Caco-2 (cell line): ENCODE measurements at regions of chr19 and their contacts with region 1.

Region 1: GRCh38 chr19:43425567-43426392 is 11.1 kb downstream of the TEX101 start:
- DNase-seq: peak in 1 of 2 experiments; percentile 29
- H3K4me3 ChIP-seq: no peak overlapping the region
- H3K4me3 Mint-ChIP-seq: no peak overlapping the region
- H3K27ac Mint-ChIP-seq: peak overlapping the region; percentile 40
- H3K4me1 ChIP-seq: no peaks in the 10 kb centered on the region
- H3K4me1 Mint-ChIP-seq: peaks cover 13% of the 10 kb centered on the region
- H3K27me3 ChIP-seq: no peaks in the 10 kb centered on the region
- H3K27me3 Mint-ChIP-seq: no peaks in the 10 kb centered on the region
- CTCF ChIP-seq: peak; percentile 46 to 67

Region 2: GRCh38 chr19:42881229-42881628 is 544.6 kb before region 1 on chr19:
- CTCF ChIA-PET with region 1: interaction called, 11 read pairs
- POLR2A ChIA-PET with region 1: no interaction called
- intact Hi-C with region 1: no loop called
- DNase-seq: no peak
- H3K4me3 ChIP-seq: no peak overlapping the region
- H3K4me3 Mint-ChIP-seq: no peak overlapping the region
- H3K27ac Mint-ChIP-seq: no peak overlapping the region
- H3K4me1 ChIP-seq: peaks cover 10% of the 10 kb centered on the region
- H3K4me1 Mint-ChIP-seq: peaks cover 10% of the 10 kb centered on the region
- H3K27me3 ChIP-seq: no peaks in the 10 kb centered on the region
- H3K27me3 Mint-ChIP-seq: no peaks in the 10 kb centered on the region
- CTCF ChIP-seq: peak; percentile 28 to 40

Region 3: GRCh38 chr19:43311706-43312105 is 114.1 kb before region 1 on chr19:
- CTCF ChIA-PET with region 1: interaction called, 10 read pairs
- POLR2A ChIA-PET with region 1: no interaction called
- intact Hi-C with region 1: no loop called
- DNase-seq: no peak
- H3K4me3 ChIP-seq: no peak overlapping the region
- H3K4me3 Mint-ChIP-seq: no peak overlapping the region
- H3K27ac Mint-ChIP-seq: no peak overlapping the region
- H3K4me1 ChIP-seq: no peaks in the 10 kb centered on the region
- H3K4me1 Mint-ChIP-seq: peaks cover 14% of the 10 kb centered on the region
- H3K27me3 ChIP-seq: no peaks in the 10 kb centered on the region
- H3K27me3 Mint-ChIP-seq: no peaks in the 10 kb centered on the region
- CTCF ChIP-seq: no peak

Region 4: DNA sequence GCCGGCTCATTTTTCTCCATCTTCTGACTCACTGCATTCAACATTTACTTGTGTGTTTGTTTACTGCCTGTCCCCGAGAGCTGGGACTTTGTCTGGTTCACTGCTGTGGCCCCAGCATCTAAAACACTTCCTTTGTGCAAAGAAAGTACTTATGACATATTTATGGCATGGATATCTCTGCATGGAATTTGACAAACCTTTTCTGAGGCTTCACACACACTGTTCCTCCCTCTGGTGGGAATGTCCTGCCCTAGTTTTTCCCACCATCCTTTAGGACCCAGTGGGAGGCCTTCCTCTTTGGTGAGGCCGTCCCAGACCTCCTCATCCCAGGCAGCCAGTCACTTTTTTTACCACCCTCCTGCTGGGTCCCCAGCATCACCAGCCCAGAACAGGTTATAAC is 184.7 kb after region 1 on chr19:
- CTCF ChIA-PET with region 1: no interaction called
- POLR2A ChIA-PET with region 1: no interaction called
- intact Hi-C with region 1: no loop called
- DNase-seq: no peak
- H3K4me3 ChIP-seq: no peak overlapping the region
- H3K4me3 Mint-ChIP-seq: no peak overlapping the region
- H3K27ac Mint-ChIP-seq: no peak overlapping the region
- H3K4me1 ChIP-seq: no peaks in the 10 kb centered on the region
- H3K4me1 Mint-ChIP-seq: peaks cover 10% of the 10 kb centered on the region
- H3K27me3 ChIP-seq: no peaks in the 10 kb centered on the region
- H3K27me3 Mint-ChIP-seq: no peaks in the 10 kb centered on the region
- CTCF ChIP-seq: no peak

Region 5: DNA sequence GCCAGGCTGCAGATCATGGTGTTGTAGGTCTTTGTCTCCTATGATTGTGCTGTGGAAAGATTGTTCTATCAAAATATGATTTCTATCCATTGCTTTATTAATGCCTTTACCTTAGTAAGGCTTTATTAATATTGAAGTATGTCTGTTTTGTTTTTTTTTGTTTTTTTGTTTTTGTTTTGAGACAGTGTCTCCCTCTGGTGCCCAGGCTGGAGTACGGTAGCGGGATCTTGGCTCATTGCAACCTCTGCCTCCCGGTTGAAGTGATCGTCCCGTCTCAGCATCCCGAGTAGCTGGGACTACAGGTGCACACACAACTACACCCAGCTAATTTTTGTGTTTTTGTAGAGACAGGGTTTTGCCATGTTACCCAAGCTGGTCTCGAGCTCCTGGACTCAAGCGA is 297.8 kb after region 1 on chr19:
- CTCF ChIA-PET with region 1: no interaction called
- POLR2A ChIA-PET with region 1: no interaction called
- intact Hi-C with region 1: no loop called
- DNase-seq: no peak
- H3K4me3 ChIP-seq: no peak overlapping the region
- H3K4me3 Mint-ChIP-seq: no peak overlapping the region
- H3K27ac Mint-ChIP-seq: no peak overlapping the region
- H3K4me1 ChIP-seq: no peaks in the 10 kb centered on the region
- H3K4me1 Mint-ChIP-seq: no peaks in the 10 kb centered on the region
- H3K27me3 ChIP-seq: no peaks in the 10 kb centered on the region
- H3K27me3 Mint-ChIP-seq: no peaks in the 10 kb centered on the region
- CTCF ChIP-seq: peak in 1 of 2 experiments; percentile 9